ENCODE measurements at regions of chr5 and their contacts with region 1.

Region 1: GRCh38 chr5:127564002-127564769 is 46.7 kb downstream of the PRRC1 start:
- DNase-seq: no peak
- H3K4me3 ChIP-seq: no peak overlapping the region
- H3K27ac ChIP-seq: no peak overlapping the region
- H3K4me1 ChIP-seq: peaks cover 0 to 2% (median 0%) of the 10 kb centered on the region in 4 experiments; a peak in 1 of 7 replicates
- H3K27me3 ChIP-seq: no peaks in the 10 kb centered on the region
- CTCF ChIP-seq: peak in 2 of 3 experiments; percentile 67 to 78; a peak in 3 of 4 replicates
- EP300 ChIP-seq: no peak
- POLR2A ChIP-seq: no peak
- RAD21 ChIP-seq: peak; percentile 93 to 94

Region 2: GRCh38 chr5:127754259-127754658 is 190.1 kb after region 1 on chr5:
- CTCF ChIA-PET with region 1: interaction called, 10 read pairs
- POLR2A ChIA-PET with region 1: no interaction called
- DNase-seq: no peak
- H3K4me3 ChIP-seq: no peak overlapping the region
- H3K27ac ChIP-seq: no peak overlapping the region
- H3K4me1 ChIP-seq: peaks cover 0 to 5% (median 0%) of the 10 kb centered on the region in 4 experiments; a peak in 2 of 7 replicates
- H3K27me3 ChIP-seq: no peaks in the 10 kb centered on the region
- CTCF ChIP-seq: no peak
- EP300 ChIP-seq: no peak
- POLR2A ChIP-seq: no peak
- RAD21 ChIP-seq: no peak

Region 3: DNA sequence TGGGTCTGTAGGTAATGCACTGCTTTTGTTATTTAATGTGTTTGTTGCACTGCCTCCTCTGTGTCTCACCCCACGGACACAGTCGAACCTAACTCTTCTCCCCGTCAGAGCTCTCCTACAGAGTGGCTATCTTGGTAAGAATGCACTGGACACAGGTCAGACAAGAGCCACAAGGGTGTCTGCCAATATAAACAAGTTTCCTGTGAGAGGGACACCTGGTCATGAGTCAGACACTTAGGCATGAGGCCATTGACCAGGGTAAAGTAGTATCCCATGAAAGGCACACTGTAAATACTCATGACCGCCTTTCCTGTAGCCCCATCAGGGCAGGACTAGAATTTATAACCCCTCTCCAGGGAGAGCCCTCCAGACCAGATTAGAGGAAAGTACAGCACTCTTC is 634.9 kb after region 1 on chr5:
- CTCF ChIA-PET with region 1: interaction called, 10 read pairs
- POLR2A ChIA-PET with region 1: no interaction called
- DNase-seq: no peak
- H3K4me3 ChIP-seq: no peak overlapping the region
- H3K27ac ChIP-seq: no peak overlapping the region
- H3K4me1 ChIP-seq: peaks cover 0 to 2% (median under 1%) of the 10 kb centered on the region in 4 experiments; a peak in 2 of 7 replicates
- H3K27me3 ChIP-seq: no peaks in the 10 kb centered on the region; a peak in 1 of 7 replicates
- CTCF ChIP-seq: no peak
- EP300 ChIP-seq: no peak
- POLR2A ChIP-seq: no peak
- RAD21 ChIP-seq: no peak

Region 4: DNA sequence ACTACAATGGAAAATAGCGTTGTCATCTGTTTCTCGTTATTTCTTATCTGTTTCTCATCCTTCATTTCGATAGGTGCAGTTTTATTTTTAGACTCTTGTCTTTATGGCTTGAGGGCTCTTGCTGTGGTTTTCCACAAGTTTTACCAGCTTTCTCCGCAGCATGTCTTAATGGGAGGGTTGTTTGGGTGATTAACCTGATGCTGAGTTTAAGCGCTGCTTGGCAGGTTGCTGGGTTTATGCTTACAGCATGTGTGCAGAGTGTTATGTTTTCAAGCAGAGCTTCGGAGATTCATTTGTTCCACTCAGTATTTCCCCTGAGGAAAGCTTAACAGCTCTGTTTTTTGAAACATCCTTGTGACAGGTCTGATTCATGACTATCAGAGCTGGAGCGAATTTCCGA is 673.4 kb after region 1 on chr5:
- CTCF ChIA-PET with region 1: no interaction called
- POLR2A ChIA-PET with region 1: no interaction called
- DNase-seq: no peak
- H3K4me3 ChIP-seq: no peak overlapping the region
- H3K27ac ChIP-seq: no peak overlapping the region
- H3K4me1 ChIP-seq: no peaks in the 10 kb centered on the region
- H3K27me3 ChIP-seq: no peaks in the 10 kb centered on the region
- CTCF ChIP-seq: no peak
- EP300 ChIP-seq: no peak
- POLR2A ChIP-seq: no peak
- RAD21 ChIP-seq: no peak

Measured in H1 (cell line).